ENCODE measurements at regions of chr2 and their contacts with region 1.

Region 1: GRCh38 chr2:105576440-105577252 is 168.1 kb upstream of the NCK2 start:
- DNase-seq: peak in 1 of 3 donors; percentile 42
- ATAC-seq: peak; percentile 52 to 56
- H3K4me3 ChIP-seq: no peak overlapping the region
- H3K27ac ChIP-seq: no peak overlapping the region
- H3K4me1 ChIP-seq: no peaks in the 10 kb centered on the region
- H3K27me3 ChIP-seq: no peaks in the 10 kb centered on the region

Region 2: DNA sequence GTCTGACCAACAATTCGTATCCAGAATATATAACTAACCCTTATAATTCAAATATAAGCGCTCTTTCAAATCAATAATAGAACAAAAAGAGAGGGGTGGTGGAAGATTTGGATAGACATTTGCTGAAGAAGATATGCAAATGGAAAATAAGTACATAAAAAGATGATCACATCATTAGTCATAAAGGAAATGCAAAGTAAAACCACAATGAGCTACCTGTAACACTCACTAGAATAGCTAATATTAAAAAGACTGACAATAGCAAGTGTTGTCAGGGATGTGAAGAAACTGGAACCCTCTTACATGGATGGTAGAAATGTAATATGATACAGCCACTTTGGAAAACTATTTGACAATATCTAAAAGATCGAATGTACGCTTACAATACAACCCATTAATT is 623.7 kb before region 1 on chr2:
- intact Hi-C with region 1: no loop called
- DNase-seq: no peak
- ATAC-seq: no peak
- H3K4me3 ChIP-seq: no peak overlapping the region
- H3K27ac ChIP-seq: no peak overlapping the region
- H3K4me1 ChIP-seq: no peaks in the 10 kb centered on the region
- H3K27me3 ChIP-seq: peaks cover 3% of the 10 kb centered on the region

Region 3: DNA sequence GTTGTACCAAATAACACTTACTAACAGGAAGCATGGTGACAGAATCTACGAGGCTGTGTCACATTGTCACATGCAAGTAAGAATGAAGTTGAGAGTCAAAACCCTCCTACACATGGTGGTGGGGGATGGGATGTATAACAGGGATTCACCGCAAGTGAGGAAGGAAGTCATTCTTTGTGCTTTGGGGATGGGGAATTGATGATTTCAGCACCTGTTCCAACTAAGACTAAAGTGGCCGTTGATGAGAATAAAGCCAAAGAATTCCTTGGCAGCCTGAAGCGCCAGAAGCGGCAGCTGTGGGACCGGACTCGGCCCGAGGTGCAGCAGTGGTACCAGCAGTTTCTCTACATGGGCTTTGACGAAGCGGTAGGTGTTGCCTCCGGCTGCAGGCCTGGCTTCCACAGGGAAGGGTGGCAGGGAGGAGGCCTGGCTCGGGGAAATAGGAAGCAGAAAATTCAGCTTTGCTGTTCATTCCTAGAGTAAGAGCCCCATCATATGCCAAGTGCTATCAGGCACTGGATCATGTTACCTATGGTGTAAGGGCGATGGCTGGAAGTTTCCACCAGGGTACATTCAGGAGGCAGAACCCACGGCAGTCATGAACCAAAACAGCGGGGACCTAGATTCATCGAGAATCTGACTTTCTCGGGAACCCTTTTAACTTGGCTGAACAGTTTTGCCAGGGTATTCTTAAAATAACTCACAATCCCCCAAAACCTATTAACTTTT is 497.2 kb after region 1 on chr2:
- intact Hi-C with region 1: loop called in 1 of 4 experiments (anchors 10 kb)
- DNase-seq: no peak
- ATAC-seq: no peak
- H3K4me3 ChIP-seq: no peak overlapping the region
- H3K27ac ChIP-seq: no peak overlapping the region
- H3K4me1 ChIP-seq: no peaks in the 10 kb centered on the region
- H3K27me3 ChIP-seq: no peaks in the 10 kb centered on the region

Measured in right cardiac atrium (tissue), 5 donors.